Activated CD8-positive, alpha-beta T cell treated with anti-CD3 and anti-CD28 coated beads for 36 hours (primary cell): ENCODE measurements at regions of chr2 and their contacts with region 1.

Region 1: GRCh38 chr2:204135752-204136151 is 199.2 kb downstream of the ICOS start:
- DNase-seq: no peak
- ATAC-seq: peak; percentile 51
- H3K4me3 Mint-ChIP-seq: no peak overlapping the region
- H3K27ac Mint-ChIP-seq: no peak overlapping the region
- H3K4me1 Mint-ChIP-seq: no peaks in the 10 kb centered on the region
- H3K27me3 Mint-ChIP-seq: peaks cover 4% of the 10 kb centered on the region
- CTCF ChIP-seq: no peak

Region 2: DNA sequence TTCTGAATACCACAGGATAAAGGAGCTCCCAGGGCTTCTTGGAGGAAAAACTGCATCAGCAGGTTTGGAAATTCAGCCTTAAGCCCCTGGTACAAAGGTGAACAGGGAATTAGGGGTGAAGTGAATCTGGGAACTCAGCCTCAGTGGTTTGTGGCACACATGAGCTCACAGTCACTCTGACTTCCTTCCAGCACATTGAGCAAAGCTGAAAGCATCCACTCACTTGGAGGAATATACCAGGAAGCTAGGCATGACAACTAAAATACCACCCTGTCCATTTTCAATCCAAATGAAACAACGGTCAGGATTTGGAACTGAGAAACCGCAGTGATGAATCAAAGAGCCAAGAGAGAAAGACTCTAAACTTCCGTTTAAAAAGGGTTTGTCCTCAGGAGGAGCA is 16.9 kb after region 1 on chr2:
- CTCF ChIA-PET with region 1: interaction called, 10 read pairs
- POLR2A ChIA-PET with region 1: interaction called, 3 read pairs
- intact Hi-C with region 1: no loop called
- DNase-seq: no peak
- ATAC-seq: no peak
- H3K4me3 Mint-ChIP-seq: no peak overlapping the region
- H3K27ac Mint-ChIP-seq: no peak overlapping the region
- H3K4me1 Mint-ChIP-seq: no peaks in the 10 kb centered on the region
- H3K27me3 Mint-ChIP-seq: peaks cover 18% of the 10 kb centered on the region
- CTCF ChIP-seq: no peak